ENCODE measurements at regions of chr11 and their contacts with region 1.

Region 1: GRCh38 chr11:35082321-35083182 is 56.4 kb upstream of the CD44 start:
- DNase-seq: peak; percentile 81
- ATAC-seq: peak; percentile 96
- H3K4me3 ChIP-seq: peak overlapping the region; percentile 27 to 48
- H3K27ac ChIP-seq: peak overlapping the region; percentile 82
- H3K4me1 ChIP-seq: peaks cover 35 to 51% of the 10 kb centered on the region in 2 experiments
- H3K27me3 ChIP-seq: no peaks in the 10 kb centered on the region
- CTCF ChIP-seq: peak in 1 of 3 experiments; percentile 15; a peak in 1 of 6 replicates
- POLR2A ChIP-seq: no peak
- RAD21 ChIP-seq: 0 out of 2 replicates have a peak, but pooled peaks have one; percentile 33

Region 2: GRCh38 chr11:34198523-34198922 is 884.0 kb before region 1 on chr11:
- CTCF ChIA-PET with region 1: no interaction called
- POLR2A ChIA-PET with region 1: no interaction called
- RAD21 ChIA-PET with region 1: no interaction called
- intact Hi-C with region 1: no loop called
- DNase-seq: no peak
- ATAC-seq: no peak
- H3K4me3 ChIP-seq: no peak overlapping the region
- H3K27ac ChIP-seq: no peak overlapping the region
- H3K4me1 ChIP-seq: peaks cover 7 to 26% of the 10 kb centered on the region in 2 experiments
- H3K27me3 ChIP-seq: no peaks in the 10 kb centered on the region
- CTCF ChIP-seq: no peak
- POLR2A ChIP-seq: no peak
- RAD21 ChIP-seq: no peak

Region 3: GRCh38 chr11:35144136-35144741 is 61.7 kb after region 1 on chr11:
- CTCF ChIA-PET with region 1: no interaction called
- POLR2A ChIA-PET with region 1: interaction called, 3 read pairs
- RAD21 ChIA-PET with region 1: no interaction called
- intact Hi-C with region 1: loop called (anchors 5 kb)
- DNase-seq: no peak
- ATAC-seq: peak; percentile 44
- H3K4me3 ChIP-seq: peak overlapping the region; percentile 19 to 44; a peak in 3 of 4 replicates
- H3K27ac ChIP-seq: peak overlapping the region; percentile 97
- H3K4me1 ChIP-seq: peaks cover 68 to 90% of the 10 kb centered on the region in 2 experiments
- H3K27me3 ChIP-seq: no peaks in the 10 kb centered on the region
- CTCF ChIP-seq: no peak
- POLR2A ChIP-seq: no peak
- RAD21 ChIP-seq: no peak

Measured in HCT116 (cell line).